ENCODE measurements at regions of chr4 and their contacts with region 1.

Region 1: DNA sequence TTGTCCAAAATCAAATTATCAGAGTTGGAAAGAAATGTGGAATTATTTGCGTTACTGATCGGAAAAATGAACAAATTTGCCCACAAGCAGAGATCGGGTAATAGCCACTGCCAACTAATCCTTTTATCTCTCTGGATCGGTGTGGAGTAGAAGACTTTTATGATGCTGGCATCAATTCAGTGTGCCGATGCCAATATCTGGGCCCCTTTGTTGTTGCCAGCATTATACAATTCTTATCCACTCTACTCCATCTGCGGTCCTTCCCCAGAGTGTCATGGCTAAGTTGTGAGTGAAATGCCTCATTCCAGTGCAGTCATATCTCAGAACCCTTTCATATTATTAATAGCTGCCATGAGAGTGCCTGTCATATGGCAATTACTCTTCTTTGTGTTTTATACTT is 660.2 kb downstream of the ADGRL3 start:
- DNase-seq: no peak
- ATAC-seq: no peak
- H3K4me3 ChIP-seq: no peak overlapping the region
- H3K27ac ChIP-seq: no peak overlapping the region
- H3K4me1 ChIP-seq: no peaks in the 10 kb centered on the region
- H3K27me3 ChIP-seq: no peaks in the 10 kb centered on the region
- CTCF ChIP-seq: no peak

Region 2: DNA sequence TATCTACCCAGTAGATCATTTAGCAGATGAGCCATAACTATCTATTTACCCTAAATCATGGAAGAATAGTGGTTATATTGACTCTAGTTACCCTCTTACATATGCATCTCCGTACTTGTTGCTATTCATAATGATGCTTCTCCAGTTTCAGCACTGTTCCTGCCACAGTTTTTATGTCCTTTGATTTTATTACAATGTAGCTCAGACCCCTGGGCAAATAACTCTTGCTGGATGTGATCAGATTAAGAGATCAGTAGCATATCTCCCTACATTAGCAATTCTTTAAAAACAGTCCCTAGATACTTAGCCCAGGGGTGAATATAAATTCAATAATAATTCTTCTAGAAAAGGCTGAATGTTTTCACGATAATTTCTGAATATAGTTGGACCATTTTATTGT is 36.3 kb after region 1 on chr4:
- CTCF ChIA-PET with region 1: no interaction called
- POLR2A ChIA-PET with region 1: interaction called, 11 read pairs
- in situ Hi-C with region 1: no loop called
- intact Hi-C with region 1: no loop called
- DNase-seq: no peak
- ATAC-seq: no peak
- H3K4me3 ChIP-seq: no peak overlapping the region
- H3K27ac ChIP-seq: no peak overlapping the region
- H3K4me1 ChIP-seq: no peaks in the 10 kb centered on the region
- H3K27me3 ChIP-seq: no peaks in the 10 kb centered on the region
- CTCF ChIP-seq: no peak

Region 3: DNA sequence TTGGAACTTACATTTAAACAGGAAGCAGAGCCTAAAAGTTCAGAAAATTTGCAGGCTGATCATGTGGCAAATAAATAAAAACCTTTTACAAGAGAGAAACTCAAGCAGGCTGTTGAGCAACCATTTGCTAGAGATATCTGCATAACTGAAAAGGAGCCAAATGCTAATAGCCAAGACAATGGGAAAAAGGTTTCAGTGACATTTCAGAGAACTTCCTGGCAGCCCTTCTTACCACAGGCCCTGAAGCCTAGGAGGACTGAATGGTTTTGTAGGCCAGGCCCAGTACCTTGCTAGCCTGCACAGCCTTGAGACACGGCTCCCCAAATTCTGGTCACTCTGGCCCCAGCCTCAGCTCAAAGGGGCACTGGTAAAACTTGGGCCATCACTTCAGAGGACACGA is 284.9 kb after region 1 on chr4:
- CTCF ChIA-PET with region 1: no interaction called
- POLR2A ChIA-PET with region 1: no interaction called
- in situ Hi-C with region 1: no loop called
- intact Hi-C with region 1: no loop called
- DNase-seq: no peak
- ATAC-seq: no peak
- H3K4me3 ChIP-seq: no peak overlapping the region
- H3K27ac ChIP-seq: no peak overlapping the region
- H3K4me1 ChIP-seq: no peaks in the 10 kb centered on the region
- H3K27me3 ChIP-seq: no peaks in the 10 kb centered on the region
- CTCF ChIP-seq: no peak

Measured in Panc1 (cell line).